Activated T-helper 1 cell treated with anti-CD3 and anti-CD28 coated beads, Interleukin-12 subunit alpha, Interleukin-12 subunit beta, Interleukin-2, Interleukin-4 antibody, amounts not matched to agents 30 ng/mL and 10 ng/mL and 1 ng/mL, durations not matched to agents 14 hours and 24 hours and 36 hours (primary cell): ENCODE measurements at regions of chr18 and their contacts with region 1.

Region 1: GRCh38 chr18:46660955-46661749 is 4.1 kb upstream of the LOXHD1 start:
- DNase-seq: no peak
- H3K4me3 Mint-ChIP-seq: no peak overlapping the region
- H3K27ac Mint-ChIP-seq: no peak overlapping the region
- H3K4me1 Mint-ChIP-seq: no peaks in the 10 kb centered on the region
- H3K27me3 Mint-ChIP-seq: peaks cover 3% of the 10 kb centered on the region

Region 2: DNA sequence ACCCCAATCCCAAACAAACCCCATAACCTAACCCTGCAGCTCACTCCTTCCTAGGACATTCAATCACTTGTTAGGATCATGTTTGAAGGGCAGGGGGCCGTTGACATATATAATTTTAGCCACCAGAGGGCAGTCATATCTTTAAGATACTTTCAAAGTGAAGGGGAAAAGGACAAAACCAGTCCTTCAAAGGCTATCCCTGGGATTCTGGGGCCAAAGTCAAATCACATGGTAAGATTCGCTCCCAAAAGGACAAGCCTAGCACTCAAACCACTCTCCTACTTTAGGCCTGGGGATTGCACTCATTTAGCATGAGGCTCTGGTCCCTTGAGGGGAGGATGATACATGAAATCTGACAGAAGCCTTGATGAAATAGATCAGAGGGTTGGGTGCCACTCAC is 512.3 kb before region 1 on chr18:
- intact Hi-C with region 1: loop called (anchors 1 kb)
- DNase-seq: peak; percentile 38
- H3K4me3 Mint-ChIP-seq: no peak overlapping the region
- H3K27ac Mint-ChIP-seq: peak overlapping the region; percentile 7
- H3K4me1 Mint-ChIP-seq: peaks cover 30% of the 10 kb centered on the region
- H3K27me3 Mint-ChIP-seq: peaks cover 2% of the 10 kb centered on the region

Region 3: GRCh38 chr18:46281185-46282176 is 379.7 kb before region 1 on chr18:
- intact Hi-C with region 1: loop called (anchors 1 kb)
- DNase-seq: peak; percentile 41
- H3K4me3 Mint-ChIP-seq: no peak overlapping the region
- H3K27ac Mint-ChIP-seq: no peak overlapping the region
- H3K4me1 Mint-ChIP-seq: peaks cover 18% of the 10 kb centered on the region
- H3K27me3 Mint-ChIP-seq: no peaks in the 10 kb centered on the region

Region 4: GRCh38 chr18:46469186-46469915 is 191.8 kb before region 1 on chr18:
- intact Hi-C with region 1: no loop called
- DNase-seq: no peak
- H3K4me3 Mint-ChIP-seq: no peak overlapping the region
- H3K27ac Mint-ChIP-seq: no peak overlapping the region
- H3K4me1 Mint-ChIP-seq: no peaks in the 10 kb centered on the region
- H3K27me3 Mint-ChIP-seq: peaks cover 9% of the 10 kb centered on the region

Region 5: GRCh38 chr18:46481048-46481846 is 179.9 kb before region 1 on chr18:
- intact Hi-C with region 1: loop called (anchors 2 kb)
- DNase-seq: peak; percentile 27
- H3K4me3 Mint-ChIP-seq: no peak overlapping the region
- H3K27ac Mint-ChIP-seq: no peak overlapping the region
- H3K4me1 Mint-ChIP-seq: no peaks in the 10 kb centered on the region
- H3K27me3 Mint-ChIP-seq: peaks cover 13% of the 10 kb centered on the region

Region 6: DNA sequence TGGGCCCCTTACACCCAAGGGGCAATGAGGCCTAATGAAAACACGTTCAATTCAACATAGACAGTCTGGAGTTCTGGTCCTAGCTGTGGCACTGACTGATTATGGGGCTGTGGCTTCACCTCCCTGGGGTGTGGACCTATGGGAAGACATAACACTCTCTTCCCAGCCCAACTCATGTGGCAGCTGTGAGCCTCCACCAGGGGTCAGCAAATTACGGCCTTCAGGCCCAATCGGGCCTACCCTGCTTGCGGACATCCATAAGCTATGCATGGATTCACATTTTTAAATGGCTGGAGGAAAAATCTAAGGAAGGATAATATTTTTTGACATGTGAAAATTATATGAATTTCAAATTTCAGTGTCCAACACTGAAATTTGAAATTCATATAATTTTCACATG is 105.4 kb before region 1 on chr18:
- intact Hi-C with region 1: loop called (anchors 1 kb)
- DNase-seq: no peak
- H3K4me3 Mint-ChIP-seq: no peak overlapping the region
- H3K27ac Mint-ChIP-seq: no peak overlapping the region
- H3K4me1 Mint-ChIP-seq: no peaks in the 10 kb centered on the region
- H3K27me3 Mint-ChIP-seq: no peaks in the 10 kb centered on the region